GM12878 (cell line): ENCODE measurements at regions of chr9 and their contacts with region 1.

Region 1: DNA sequence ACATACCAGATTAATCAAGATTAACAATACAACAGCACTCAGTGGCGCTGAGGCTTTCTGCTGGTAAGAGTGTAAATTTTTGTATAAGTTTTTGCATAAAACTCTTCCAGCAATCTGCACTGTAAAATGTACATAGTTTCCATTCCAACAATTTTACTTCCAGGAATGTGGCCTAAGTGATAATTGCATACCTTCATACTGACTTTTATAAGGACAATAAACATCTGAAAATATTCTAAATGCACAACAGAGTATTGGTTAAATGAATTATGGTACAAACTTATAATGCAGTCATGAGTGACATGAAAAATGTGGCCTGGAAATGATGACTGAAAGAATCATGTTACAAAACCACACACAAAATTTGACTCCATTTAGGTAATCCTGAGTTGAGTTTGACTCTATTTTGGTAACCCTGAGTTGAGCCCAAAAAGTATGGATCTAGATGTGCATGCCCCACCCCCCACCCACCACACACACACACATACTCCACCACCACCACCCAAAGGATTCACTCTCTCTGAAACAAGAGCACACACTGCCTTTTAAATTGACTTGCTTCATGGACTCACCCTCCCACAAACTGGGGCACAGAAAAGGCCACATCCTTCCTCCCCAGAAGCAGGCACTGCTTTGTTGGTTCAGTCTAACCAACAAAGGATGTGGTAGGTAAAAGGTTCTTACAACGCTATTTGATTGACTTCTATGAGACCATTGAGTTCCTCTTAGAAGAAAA is 137.6 kb downstream of the SUSD1 start:
- DNase-seq: peak; percentile 97
- ATAC-seq: peak; percentile 71
- H3K4me3 ChIP-seq: no peak overlapping the region
- H3K27ac ChIP-seq: peak overlapping the region; percentile 97
- H3K4me1 ChIP-seq: peaks cover 63% of the 10 kb centered on the region
- H3K27me3 ChIP-seq: no peaks in the 10 kb centered on the region
- CTCF ChIP-seq: no peak
- EP300 ChIP-seq: peak; percentile 74 to 78; a peak in 3 of 4 replicates
- POLR2A ChIP-seq: peak; percentile 69
- RAD21 ChIP-seq: peak; percentile 44; the same call in 1 of the 2 replicates

Region 2: GRCh38 chr9:111916234-111916645 is 121.2 kb before region 1 on chr9:
- CTCF ChIA-PET with region 1: interaction called, 4 read pairs
- POLR2A ChIA-PET with region 1: interaction called, 4 read pairs
- RAD21 ChIA-PET with region 1: interaction called, 23 read pairs
- SMC1A ChIA-PET with region 1: interaction called, 17 read pairs
- in situ Hi-C with region 1: no loop called
- intact Hi-C with region 1: loop called (anchors 2 kb)
- DNase-seq: no peak
- ATAC-seq: peak; percentile 67
- H3K4me3 ChIP-seq: peak overlapping the region; percentile 54; the same call in 1 of the 2 replicates
- H3K27ac ChIP-seq: peak overlapping the region; percentile 76
- H3K4me1 ChIP-seq: peaks cover 47% of the 10 kb centered on the region
- H3K27me3 ChIP-seq: no peaks in the 10 kb centered on the region
- CTCF ChIP-seq: no peak
- EP300 ChIP-seq: peak; percentile 42 to 60; a peak in 3 of 4 replicates
- POLR2A ChIP-seq: no peak
- RAD21 ChIP-seq: no peak

Region 3: DNA sequence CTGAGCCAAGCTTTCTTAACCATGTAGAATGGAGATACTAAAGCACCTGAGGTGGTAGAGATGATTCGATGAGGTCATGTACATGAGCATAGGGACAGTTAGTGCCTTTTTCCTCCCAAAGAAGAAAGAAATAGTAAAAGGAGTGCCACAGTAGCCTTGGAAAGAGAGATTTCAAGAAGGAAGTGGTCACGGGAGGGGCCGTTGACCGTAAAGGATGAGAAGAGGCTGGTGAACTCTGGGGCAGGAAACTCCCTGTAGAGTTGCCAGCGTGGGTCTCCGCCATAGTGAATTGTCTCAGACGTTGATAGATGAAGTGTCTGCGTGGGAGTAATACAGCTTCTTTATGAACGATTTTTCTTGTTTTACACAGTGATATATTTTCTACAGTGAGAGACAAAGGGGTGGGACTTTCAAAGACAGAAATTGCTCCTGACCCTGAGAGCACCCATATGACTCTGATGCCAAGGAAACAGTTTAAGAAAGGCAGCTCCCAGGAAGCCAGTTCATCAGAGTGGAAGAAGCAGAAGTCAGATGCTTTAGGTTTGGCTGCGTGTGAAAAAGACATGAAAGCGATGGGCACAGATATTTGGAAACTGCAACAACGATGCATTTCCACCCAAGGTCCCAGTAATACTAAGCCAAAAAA is 99.5 kb before region 1 on chr9:
- CTCF ChIA-PET with region 1: no interaction called
- POLR2A ChIA-PET with region 1: interaction called, 6 read pairs
- RAD21 ChIA-PET with region 1: interaction called, 6 read pairs
- SMC1A ChIA-PET with region 1: interaction called, 13 read pairs
- in situ Hi-C with region 1: no loop called
- intact Hi-C with region 1: no loop called
- DNase-seq: peak; percentile 74
- ATAC-seq: peak; percentile 90
- H3K4me3 ChIP-seq: no peak overlapping the region
- H3K27ac ChIP-seq: peak overlapping the region; percentile 80
- H3K4me1 ChIP-seq: peaks cover 21% of the 10 kb centered on the region
- H3K27me3 ChIP-seq: no peaks in the 10 kb centered on the region
- CTCF ChIP-seq: no peak
- EP300 ChIP-seq: peak; percentile 68 to 77; a peak in 2 of 4 replicates
- POLR2A ChIP-seq: no peak; the same call in none of the 2 replicates
- RAD21 ChIP-seq: no peak

Region 4: DNA sequence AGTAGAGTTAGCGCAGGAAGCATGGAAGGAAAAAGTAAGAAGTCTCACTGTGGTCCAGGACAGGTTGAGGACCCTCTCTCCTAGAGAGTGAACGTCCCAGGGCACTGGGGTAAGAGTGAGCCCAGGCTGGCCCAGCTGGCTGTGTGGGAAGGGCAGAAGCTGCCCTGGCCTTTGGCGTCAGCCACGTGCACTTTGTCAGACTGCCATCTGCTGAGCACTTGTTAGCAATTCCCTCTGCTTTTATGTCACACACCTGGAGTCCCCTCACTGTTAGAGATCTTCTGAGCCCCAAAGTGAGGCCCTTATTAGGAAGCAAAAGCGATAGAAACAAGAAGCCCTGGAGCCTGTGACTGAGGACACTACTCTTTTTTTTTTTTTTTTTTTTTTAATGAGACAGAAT is 61.7 kb before region 1 on chr9:
- CTCF ChIA-PET with region 1: no interaction called
- POLR2A ChIA-PET with region 1: interaction called, 7 read pairs
- RAD21 ChIA-PET with region 1: interaction called, 3 read pairs
- SMC1A ChIA-PET with region 1: interaction called, 313 read pairs
- in situ Hi-C with region 1: no loop called
- intact Hi-C with region 1: no loop called
- DNase-seq: peak; percentile 39
- ATAC-seq: peak; percentile 79
- H3K4me3 ChIP-seq: no peak overlapping the region
- H3K27ac ChIP-seq: no peak overlapping the region
- H3K4me1 ChIP-seq: peaks cover 12% of the 10 kb centered on the region
- H3K27me3 ChIP-seq: no peaks in the 10 kb centered on the region
- CTCF ChIP-seq: peak; percentile 4 to 51 (median 14); a peak in 2 of 6 replicates
- EP300 ChIP-seq: no peak
- POLR2A ChIP-seq: no peak
- RAD21 ChIP-seq: peak; percentile 57

Region 5: GRCh38 chr9:112012026-112012902 is 25.2 kb before region 1 on chr9:
- CTCF ChIA-PET with region 1: interaction called, 16 read pairs
- POLR2A ChIA-PET with region 1: interaction called, 124 read pairs
- RAD21 ChIA-PET with region 1: interaction called, 72 read pairs
- SMC1A ChIA-PET with region 1: interaction called, 269 read pairs
- in situ Hi-C with region 1: no loop called
- intact Hi-C with region 1: no loop called
- DNase-seq: peak; percentile 96
- ATAC-seq: peak; percentile 92
- H3K4me3 ChIP-seq: no peak overlapping the region
- H3K27ac ChIP-seq: peak overlapping the region; percentile 92
- H3K4me1 ChIP-seq: peaks cover 52% of the 10 kb centered on the region
- H3K27me3 ChIP-seq: no peaks in the 10 kb centered on the region
- CTCF ChIP-seq: no peak
- EP300 ChIP-seq: peak; percentile 96 to 97
- POLR2A ChIP-seq: peak; percentile 43; the same call in 1 of the 2 replicates
- RAD21 ChIP-seq: peak; percentile 35

Region 6: GRCh38 chr9:112050544-112051475 is 13.4 kb after region 1 on chr9:
- CTCF ChIA-PET with region 1: interaction called, 4 read pairs
- POLR2A ChIA-PET with region 1: interaction called, 36 read pairs
- RAD21 ChIA-PET with region 1: interaction called, 56 read pairs
- SMC1A ChIA-PET with region 1: interaction called, 48 read pairs
- in situ Hi-C with region 1: no loop called
- intact Hi-C with region 1: no loop called
- DNase-seq: no peak
- ATAC-seq: no peak
- H3K4me3 ChIP-seq: no peak overlapping the region
- H3K27ac ChIP-seq: no peak overlapping the region
- H3K4me1 ChIP-seq: peaks cover 31% of the 10 kb centered on the region
- H3K27me3 ChIP-seq: no peaks in the 10 kb centered on the region
- CTCF ChIP-seq: no peak
- EP300 ChIP-seq: no peak
- POLR2A ChIP-seq: no peak
- RAD21 ChIP-seq: no peak

Region 7: DNA sequence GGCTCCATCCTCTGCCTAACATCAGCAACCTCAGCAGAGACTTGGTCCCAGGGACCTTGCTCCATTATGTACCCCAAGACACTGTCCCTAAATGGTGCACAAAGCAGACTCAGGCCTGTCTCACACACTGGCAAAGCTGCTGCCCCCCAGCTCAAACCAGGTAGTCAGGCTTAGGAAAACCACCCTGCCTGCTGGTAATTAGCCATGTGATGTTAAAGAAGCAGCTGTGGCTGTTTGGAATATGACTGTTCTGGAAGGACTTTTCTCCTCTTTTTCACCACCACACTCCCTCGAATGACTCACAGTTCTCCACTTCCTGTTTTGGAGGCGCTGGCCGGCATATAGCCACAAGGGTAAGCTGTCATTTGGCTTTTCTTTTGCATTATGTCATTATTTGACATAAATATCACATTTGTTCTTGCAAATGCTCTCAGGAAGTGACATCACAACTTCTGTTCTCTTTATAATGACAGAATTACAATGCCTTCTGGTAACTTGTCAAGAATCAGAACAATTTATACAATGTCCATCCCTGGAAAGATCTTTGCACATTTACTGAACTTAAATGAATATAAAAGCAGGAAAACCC is 23.8 kb after region 1 on chr9:
- CTCF ChIA-PET with region 1: no interaction called
- POLR2A ChIA-PET with region 1: interaction called, 7 read pairs
- RAD21 ChIA-PET with region 1: interaction called, 339 read pairs
- SMC1A ChIA-PET with region 1: interaction called, 301 read pairs
- in situ Hi-C with region 1: no loop called
- intact Hi-C with region 1: no loop called
- DNase-seq: peak; percentile 75
- ATAC-seq: peak; percentile 93
- H3K4me3 ChIP-seq: no peak overlapping the region
- H3K27ac ChIP-seq: peak overlapping the region; percentile 79
- H3K4me1 ChIP-seq: peaks cover 22% of the 10 kb centered on the region
- H3K27me3 ChIP-seq: no peaks in the 10 kb centered on the region
- CTCF ChIP-seq: no peak
- EP300 ChIP-seq: peak; percentile 30 to 90; a peak in 3 of 4 replicates
- POLR2A ChIP-seq: no peak
- RAD21 ChIP-seq: peak; percentile 12; the same call in 1 of the 2 replicates